PC-3 (cell line): ENCODE measurements at regions of chr3 and their contacts with region 1.

Region 1: GRCh38 chr3:55485211-55485791 is 1.8 kb downstream of the WNT5A start:
- DNase-seq: peak; percentile 82
- ATAC-seq: peak; percentile 33
- H3K4me3 ChIP-seq: peak overlapping the region; percentile 90
- H3K27ac ChIP-seq: peak overlapping the region; percentile 84
- H3K4me1 ChIP-seq: peaks cover 24% of the 10 kb centered on the region
- H3K27me3 ChIP-seq: no peaks in the 10 kb centered on the region
- CTCF ChIP-seq: peak; percentile 46

Region 2: DNA sequence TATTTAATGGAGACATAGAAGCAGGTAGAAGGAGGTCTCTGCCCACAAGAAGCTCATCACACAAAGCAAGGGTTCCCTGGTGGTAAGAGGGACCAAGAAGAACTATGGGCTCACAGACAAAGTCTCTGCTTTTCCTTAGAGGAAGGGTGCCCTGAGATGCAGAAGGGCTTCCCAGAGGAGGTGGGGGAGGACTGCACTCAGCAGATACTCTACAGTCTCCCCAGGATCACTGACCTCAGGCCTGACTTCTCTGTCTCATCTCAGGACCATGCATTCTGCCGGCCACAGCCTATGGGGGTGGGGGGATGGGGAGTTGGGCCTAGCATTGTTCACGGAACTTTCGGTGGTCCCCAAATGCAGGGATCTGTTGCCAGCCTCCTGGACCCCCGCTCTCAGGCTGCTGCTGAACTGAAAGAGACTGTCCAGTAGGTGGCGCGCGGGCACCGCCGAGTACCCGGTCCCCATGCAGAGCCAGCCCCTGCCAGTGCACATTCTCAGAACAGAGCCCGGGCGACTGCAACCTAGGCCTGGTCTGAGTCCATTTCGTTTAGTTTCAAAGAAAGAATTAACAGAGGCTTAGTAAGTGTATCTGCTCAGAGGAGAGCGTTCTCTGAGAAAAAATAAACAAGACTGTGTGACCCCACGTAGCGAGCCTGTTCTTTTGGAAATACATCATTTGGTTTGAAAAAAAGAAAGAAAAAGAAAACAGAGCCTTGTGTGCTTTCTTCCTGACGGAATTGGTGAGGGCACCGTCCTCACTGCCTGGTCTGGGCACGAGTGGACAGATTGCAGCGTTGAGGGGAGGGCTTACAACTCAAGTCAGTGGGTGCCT is 631.5 kb before region 1 on chr3:
- CTCF ChIA-PET with region 1: interaction called, 3 read pairs
- POLR2A ChIA-PET with region 1: no interaction called
- intact Hi-C with region 1: loop called (anchors 5 kb)
- DNase-seq: peak; percentile 62
- ATAC-seq: peak; percentile 93
- H3K4me3 ChIP-seq: no peak overlapping the region
- H3K27ac ChIP-seq: no peak overlapping the region
- H3K4me1 ChIP-seq: peaks cover 13% of the 10 kb centered on the region; the same call in 1 of the 2 replicates
- H3K27me3 ChIP-seq: peaks cover 28% of the 10 kb centered on the region
- CTCF ChIP-seq: peak; percentile 95

Region 3: GRCh38 chr3:55453886-55454496 is 31.3 kb before region 1 on chr3:
- CTCF ChIA-PET with region 1: no interaction called
- POLR2A ChIA-PET with region 1: no interaction called
- intact Hi-C with region 1: loop called (anchors 1 kb)
- DNase-seq: no peak
- ATAC-seq: no peak
- H3K4me3 ChIP-seq: no peak overlapping the region
- H3K27ac ChIP-seq: no peak overlapping the region
- H3K4me1 ChIP-seq: peaks cover 7% of the 10 kb centered on the region; the same call in 1 of the 2 replicates
- H3K27me3 ChIP-seq: no peaks in the 10 kb centered on the region
- CTCF ChIP-seq: no peak

Region 4: GRCh38 chr3:55597638-55598037 is 112.3 kb after region 1 on chr3:
- CTCF ChIA-PET with region 1: no interaction called
- POLR2A ChIA-PET with region 1: no interaction called
- intact Hi-C with region 1: loop called (anchors 1 kb)
- DNase-seq: peak; percentile 91
- ATAC-seq: peak; percentile 89
- H3K4me3 ChIP-seq: no peak overlapping the region
- H3K27ac ChIP-seq: peak overlapping the region; percentile 65
- H3K4me1 ChIP-seq: peaks cover 29% of the 10 kb centered on the region
- H3K27me3 ChIP-seq: no peaks in the 10 kb centered on the region
- CTCF ChIP-seq: no peak

Region 5: GRCh38 chr3:55746808-55747413 is 261.6 kb after region 1 on chr3:
- CTCF ChIA-PET with region 1: no interaction called
- POLR2A ChIA-PET with region 1: no interaction called
- intact Hi-C with region 1: loop called (anchors 1 kb)
- DNase-seq: peak; percentile 48
- ATAC-seq: no peak
- H3K4me3 ChIP-seq: no peak overlapping the region
- H3K27ac ChIP-seq: no peak overlapping the region
- H3K4me1 ChIP-seq: peaks cover 17% of the 10 kb centered on the region
- H3K27me3 ChIP-seq: no peaks in the 10 kb centered on the region
- CTCF ChIP-seq: peak; percentile 71

Region 6: GRCh38 chr3:56251343-56251945 is 766.1 kb after region 1 on chr3:
- CTCF ChIA-PET with region 1: no interaction called
- POLR2A ChIA-PET with region 1: no interaction called
- intact Hi-C with region 1: loop called (anchors 2 kb)
- DNase-seq: peak; percentile 76
- ATAC-seq: peak; percentile 83
- H3K4me3 ChIP-seq: no peak overlapping the region
- H3K27ac ChIP-seq: no peak overlapping the region
- H3K4me1 ChIP-seq: no peaks in the 10 kb centered on the region
- H3K27me3 ChIP-seq: peaks cover 8% of the 10 kb centered on the region; the same call in 1 of the 2 replicates
- CTCF ChIP-seq: peak; percentile 87